CD14-positive monocyte (primary cell): ENCODE measurements at regions of chr1 and their contacts with region 1.

Region 1: GRCh38 chr1:201783572-201783971 is 45.4 kb upstream of the IPO9 start:
- DNase-seq: no peak
- H3K4me3 ChIP-seq: no peak overlapping the region
- H3K4me3 Mint-ChIP-seq: no peak overlapping the region
- H3K27ac ChIP-seq: no peak overlapping the region
- H3K27ac Mint-ChIP-seq: peak overlapping the region in 1 of 7 donors; percentile 25
- H3K4me1 ChIP-seq: no peaks in the 10 kb centered on the region
- H3K4me1 Mint-ChIP-seq: no peaks in the 10 kb centered on the region
- H3K27me3 ChIP-seq: no peaks in the 10 kb centered on the region
- H3K27me3 Mint-ChIP-seq: peaks cover 0 to 3% (median 1%) of the 10 kb centered on the region in 3 donors
- CTCF ChIP-seq: no peak

Region 2: DNA sequence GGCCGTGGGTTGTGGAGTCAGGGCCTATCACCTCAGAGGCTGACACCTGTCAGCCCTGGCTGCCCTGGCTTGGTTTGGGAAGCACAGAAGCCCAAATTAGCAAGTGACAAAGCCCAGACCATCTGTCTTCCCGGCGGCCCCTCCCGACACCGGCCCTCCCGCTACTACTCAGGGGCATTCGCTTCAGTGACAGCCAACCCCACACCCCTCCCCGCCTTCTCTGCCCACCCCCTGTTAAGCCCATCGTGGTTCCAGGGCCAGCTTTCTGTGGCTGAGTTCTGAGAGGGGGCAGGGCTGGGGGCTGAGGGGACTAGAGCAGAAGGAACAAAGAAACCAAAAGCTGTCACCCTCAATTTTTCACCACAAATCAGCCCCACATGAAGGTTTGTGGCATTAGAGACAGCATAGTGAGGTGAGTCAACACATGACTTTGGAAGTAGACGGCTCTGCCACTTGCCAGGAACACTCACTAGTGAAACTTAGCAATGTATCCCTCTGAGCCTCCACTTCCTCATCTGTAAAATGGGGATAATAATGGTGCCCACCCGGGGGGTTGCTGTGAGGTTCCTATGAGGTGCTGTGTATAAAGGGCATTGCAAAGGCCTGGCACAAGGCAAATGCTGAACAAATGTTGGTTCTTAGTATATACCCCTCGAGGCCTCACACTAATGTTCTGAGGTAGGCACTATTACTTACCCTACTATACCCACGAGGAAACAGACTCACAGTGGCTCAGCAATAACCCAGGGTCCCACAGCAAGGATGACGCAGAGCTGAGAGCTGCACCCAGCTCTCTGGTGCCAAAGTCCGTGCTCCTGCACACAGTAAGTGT is 356.9 kb before region 1 on chr1:
- intact Hi-C with region 1: no loop called
- DNase-seq: no peak
- H3K4me3 ChIP-seq: no peak overlapping the region
- H3K4me3 Mint-ChIP-seq: no peak overlapping the region
- H3K27ac ChIP-seq: no peak overlapping the region
- H3K27ac Mint-ChIP-seq: no peak overlapping the region
- H3K4me1 ChIP-seq: peaks cover 0 to 6% of the 10 kb centered on the region in 2 donors
- H3K4me1 Mint-ChIP-seq: peaks cover 9% of the 10 kb centered on the region
- H3K27me3 ChIP-seq: no peaks in the 10 kb centered on the region
- H3K27me3 Mint-ChIP-seq: peaks cover 3 to 7% (median 4%) of the 10 kb centered on the region in 3 donors
- CTCF ChIP-seq: no peak

Region 3: GRCh38 chr1:201481761-201482493 is 301.6 kb before region 1 on chr1:
- intact Hi-C with region 1: no loop called
- DNase-seq: peak; percentile 68 to 77 (median 73)
- H3K4me3 ChIP-seq: peak overlapping the region in 1 of 3 experiments; percentile 77
- H3K4me3 Mint-ChIP-seq: peak overlapping the region; percentile 81 to 89
- H3K27ac ChIP-seq: no peak overlapping the region
- H3K27ac Mint-ChIP-seq: peak overlapping the region in 1 of 7 donors; percentile 70
- H3K4me1 ChIP-seq: peaks cover 25 to 26% of the 10 kb centered on the region in 2 donors
- H3K4me1 Mint-ChIP-seq: peaks cover 28% of the 10 kb centered on the region
- H3K27me3 ChIP-seq: peaks cover 0 to 12% of the 10 kb centered on the region in 2 donors
- H3K27me3 Mint-ChIP-seq: peaks cover 12 to 18% (median 15%) of the 10 kb centered on the region in 3 donors
- CTCF ChIP-seq: peak; percentile 97

Region 4: GRCh38 chr1:201696217-201696761 is 87.3 kb before region 1 on chr1:
- intact Hi-C with region 1: no loop called
- DNase-seq: no peak
- H3K4me3 ChIP-seq: no peak overlapping the region
- H3K4me3 Mint-ChIP-seq: no peak overlapping the region
- H3K27ac ChIP-seq: no peak overlapping the region
- H3K27ac Mint-ChIP-seq: no peak overlapping the region
- H3K4me1 ChIP-seq: no peaks in the 10 kb centered on the region
- H3K4me1 Mint-ChIP-seq: no peaks in the 10 kb centered on the region
- H3K27me3 ChIP-seq: no peaks in the 10 kb centered on the region
- H3K27me3 Mint-ChIP-seq: peaks cover 0 to under 1% (median 0%) of the 10 kb centered on the region in 3 donors
- CTCF ChIP-seq: no peak

Region 5: DNA sequence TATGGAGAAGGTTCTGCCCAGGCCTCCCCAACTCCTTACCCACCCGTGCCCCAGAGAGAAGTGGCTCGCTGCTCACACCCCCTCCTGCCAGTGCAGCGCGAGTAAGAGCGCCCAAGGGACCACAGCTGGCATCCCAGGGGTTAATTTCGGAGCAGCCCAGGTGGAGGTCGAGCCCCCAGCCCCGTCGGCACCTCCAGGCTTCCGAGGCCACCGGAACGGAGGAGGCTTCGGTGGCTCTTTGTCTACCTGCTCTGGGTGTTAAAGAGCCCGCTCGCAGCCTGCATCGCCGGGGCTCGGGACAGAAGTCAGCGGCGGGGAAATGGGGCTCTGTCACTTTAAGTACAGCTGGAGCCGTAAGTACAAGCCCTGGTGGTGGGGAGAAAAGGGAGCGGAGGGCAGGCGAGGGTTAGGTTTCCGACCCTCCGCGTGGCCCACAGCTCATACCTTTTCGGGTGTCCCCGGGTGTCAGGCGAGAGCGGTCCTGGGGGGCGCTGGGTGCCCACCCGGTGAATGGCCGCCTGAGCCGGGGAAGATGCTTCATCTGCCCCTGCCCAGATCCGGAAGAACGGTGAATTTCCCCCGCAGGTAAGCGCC is 44.0 kb before region 1 on chr1:
- intact Hi-C with region 1: loop called in 1 of 2 experiments (anchors 5 kb)
- DNase-seq: peak; percentile 27 to 40 (median 37)
- H3K4me3 ChIP-seq: peak overlapping the region; percentile 29 to 80 (median 63)
- H3K4me3 Mint-ChIP-seq: peak overlapping the region; percentile 89 to 97
- H3K27ac ChIP-seq: no peak overlapping the region
- H3K27ac Mint-ChIP-seq: peak overlapping the region in 1 of 7 donors; percentile 67
- H3K4me1 ChIP-seq: peaks cover 20 to 30% of the 10 kb centered on the region in 2 donors
- H3K4me1 Mint-ChIP-seq: peaks cover 37% of the 10 kb centered on the region
- H3K27me3 ChIP-seq: peaks cover 0 to 15% of the 10 kb centered on the region in 2 donors
- H3K27me3 Mint-ChIP-seq: peaks cover 16 to 28% (median 23%) of the 10 kb centered on the region in 3 donors
- CTCF ChIP-seq: no peak

Region 6: DNA sequence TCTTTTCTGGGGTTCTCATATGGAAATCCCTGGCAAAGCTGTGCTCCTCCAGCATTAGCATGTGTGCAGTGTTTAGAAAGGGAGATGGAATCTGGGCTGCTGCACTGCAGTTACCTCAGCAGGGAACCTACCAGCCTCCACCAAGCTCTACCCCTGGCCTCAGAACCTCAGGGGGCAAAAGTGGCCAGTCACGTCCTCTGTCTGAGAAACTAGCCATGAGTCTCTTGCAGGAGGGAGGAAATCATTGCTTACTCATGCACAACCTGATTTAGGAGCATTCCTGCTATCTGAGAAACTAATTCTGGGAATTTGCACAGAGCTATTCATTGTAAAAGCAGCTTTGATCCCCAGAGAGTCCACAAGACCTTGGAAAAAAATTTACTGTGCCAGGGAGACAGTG is 35.2 kb before region 1 on chr1:
- intact Hi-C with region 1: loop called (anchors 5 kb)
- DNase-seq: no peak
- H3K4me3 ChIP-seq: no peak overlapping the region
- H3K4me3 Mint-ChIP-seq: no peak overlapping the region
- H3K27ac ChIP-seq: no peak overlapping the region
- H3K27ac Mint-ChIP-seq: peak overlapping the region in 3 of 7 donors; percentile 86 to 94 (median 87)
- H3K4me1 ChIP-seq: peaks cover 31 to 33% of the 10 kb centered on the region in 2 donors
- H3K4me1 Mint-ChIP-seq: peaks cover 32% of the 10 kb centered on the region
- H3K27me3 ChIP-seq: no peaks in the 10 kb centered on the region
- H3K27me3 Mint-ChIP-seq: peaks cover 3 to 4% (median 3%) of the 10 kb centered on the region in 3 donors
- CTCF ChIP-seq: no peak